ENCODE measurements at regions of chr1 and their contacts with region 1.

Region 1: GRCh38 chr1:116737020-116737854 is 17.0 kb upstream of the CD2 start:
- DNase-seq: peak; percentile 70
- H3K4me3 Mint-ChIP-seq: peak overlapping the region; percentile 61
- H3K27ac Mint-ChIP-seq: peak overlapping the region; percentile 100
- H3K4me1 Mint-ChIP-seq: peaks cover 69% of the 10 kb centered on the region
- H3K27me3 Mint-ChIP-seq: no peaks in the 10 kb centered on the region

Region 2: GRCh38 chr1:116570358-116571200 is 166.7 kb before region 1 on chr1 and contains the start of gene CD58:
- intact Hi-C with region 1: loop called (anchors 10 kb)
- DNase-seq: peak; percentile 78
- H3K4me3 Mint-ChIP-seq: peak within 1 kb of the TSS; percentile 97
- H3K27ac Mint-ChIP-seq: peak within 1 kb of the TSS; percentile 91
- H3K4me1 Mint-ChIP-seq: peaks cover 65% of the 10 kb centered on the region
- H3K27me3 Mint-ChIP-seq: no peaks in the 10 kb centered on the region
- total RNA-seq, gene CD58: 40.6 and 40.9 TPM in 2 replicates

Region 3: GRCh38 chr1:116754198-116754977 is 17.2 kb after region 1 on chr1 and contains the start of gene CD2:
- intact Hi-C with region 1: loop called (anchors 1 kb)
- DNase-seq: no peak
- H3K4me3 Mint-ChIP-seq: peak within 1 kb of the TSS; percentile 99
- H3K27ac Mint-ChIP-seq: peak within 1 kb of the TSS; percentile 97
- H3K4me1 Mint-ChIP-seq: peaks cover 32% of the 10 kb centered on the region
- H3K27me3 Mint-ChIP-seq: no peaks in the 10 kb centered on the region
- total RNA-seq, gene CD2: 284 and 304 TPM in 2 replicates

Region 4: DNA sequence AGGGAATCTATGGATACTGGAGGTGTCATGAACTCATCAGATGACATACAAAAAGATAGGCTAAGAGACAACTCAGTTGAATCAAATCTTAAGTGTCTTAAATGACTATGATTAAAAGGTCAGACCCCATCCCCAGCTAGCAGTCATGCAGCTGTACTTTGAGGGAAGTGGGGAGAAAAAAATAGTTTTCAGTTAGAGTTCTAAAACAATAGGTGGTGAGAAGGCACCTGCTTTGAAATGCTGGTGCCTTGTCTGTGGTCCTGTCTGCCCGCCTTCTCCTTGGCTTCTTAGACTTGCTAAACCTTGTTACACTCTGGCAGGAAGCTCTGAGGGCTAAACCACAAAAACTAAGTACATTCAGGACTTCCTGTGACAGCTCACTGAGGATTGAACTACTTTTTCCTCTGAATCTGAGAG is 32.3 kb after region 1 on chr1:
- intact Hi-C with region 1: loop called (anchors 1 kb)
- DNase-seq: peak; percentile 74
- H3K4me3 Mint-ChIP-seq: peak overlapping the region; percentile 66
- H3K27ac Mint-ChIP-seq: peak overlapping the region; percentile 100
- H3K4me1 Mint-ChIP-seq: peaks cover 89% of the 10 kb centered on the region
- H3K27me3 Mint-ChIP-seq: no peaks in the 10 kb centered on the region

Region 5: GRCh38 chr1:116878804-116879477 is 141.7 kb after region 1 on chr1:
- intact Hi-C with region 1: loop called (anchors 1 kb)
- DNase-seq: no peak
- H3K4me3 Mint-ChIP-seq: no peak overlapping the region
- H3K27ac Mint-ChIP-seq: no peak overlapping the region
- H3K4me1 Mint-ChIP-seq: peaks cover 32% of the 10 kb centered on the region
- H3K27me3 Mint-ChIP-seq: no peaks in the 10 kb centered on the region